Activated T-helper 1 cell treated with anti-CD3 and anti-CD28 coated beads, Interleukin-12 subunit alpha, Interleukin-12 subunit beta, Interleukin-2, Interleukin-4 antibody, amounts not matched to agents 30 ng/mL and 10 ng/mL and 1 ng/mL, durations not matched to agents 14 hours and 24 hours and 36 hours (primary cell): ENCODE measurements at regions of chr14 and their contacts with region 1.

Region 1: DNA sequence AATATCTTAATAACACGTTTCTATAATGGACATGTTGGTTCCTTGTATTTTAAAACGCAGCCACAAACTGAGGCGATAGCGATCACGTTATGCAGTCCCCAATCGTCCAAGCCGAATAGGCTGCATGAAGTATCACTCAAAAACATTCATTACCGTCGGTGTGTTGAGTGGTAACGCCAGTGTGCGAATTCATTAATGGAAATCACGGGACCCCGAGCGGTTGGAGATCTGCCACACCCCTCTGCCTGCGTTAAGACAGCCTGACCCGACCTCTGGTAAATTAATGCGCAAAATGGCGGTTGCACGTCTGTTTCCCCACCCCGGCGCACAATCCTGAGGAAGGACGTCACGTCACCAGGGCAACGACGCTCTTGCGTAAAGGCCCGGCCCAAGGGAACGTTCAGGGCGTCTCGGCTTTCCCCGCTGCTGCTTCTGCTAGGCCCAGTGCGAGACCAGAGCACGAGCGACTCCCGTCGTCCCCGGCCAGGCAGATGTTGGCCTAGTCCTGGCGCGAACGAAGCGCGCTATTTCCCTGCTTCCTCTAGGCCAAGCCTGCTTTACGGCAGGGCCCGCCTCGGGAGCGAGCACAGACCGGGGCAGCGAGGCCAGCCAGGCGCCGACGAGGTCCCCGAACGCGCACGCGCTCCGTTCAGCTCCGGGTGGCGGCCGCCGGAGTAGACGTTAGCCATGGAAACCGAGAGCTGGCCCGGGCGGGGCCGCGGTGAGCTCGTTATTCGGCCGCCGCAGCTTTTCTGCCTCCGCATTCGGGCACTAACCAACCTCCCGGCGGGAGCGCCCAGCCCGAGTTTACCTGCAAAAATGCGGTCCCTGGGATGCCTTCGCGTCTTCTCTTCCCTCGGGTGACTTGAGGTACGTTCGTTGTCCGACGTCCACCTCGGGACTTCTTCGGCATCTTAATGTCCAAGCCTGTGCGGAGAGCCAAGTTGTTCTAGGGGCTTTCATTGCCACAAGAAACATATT is at the start of gene PCNX4:
- DNase-seq: peak; percentile 90
- H3K4me3 Mint-ChIP-seq: peak within 1 kb of the TSS; percentile 98
- H3K27ac Mint-ChIP-seq: peak within 1 kb of the TSS; percentile 98
- H3K4me1 Mint-ChIP-seq: peaks cover 34% of the 10 kb centered on the region
- H3K27me3 Mint-ChIP-seq: peaks cover 2% of the 10 kb centered on the region
- total RNA-seq, gene PCNX4: 41.6 and 46.7 TPM in 2 replicates

Region 2: GRCh38 chr14:59450716-59451115 is 641.1 kb before region 1 on chr14:
- intact Hi-C with region 1: no loop called
- DNase-seq: no peak
- H3K4me3 Mint-ChIP-seq: no peak overlapping the region
- H3K27ac Mint-ChIP-seq: no peak overlapping the region
- H3K4me1 Mint-ChIP-seq: no peaks in the 10 kb centered on the region
- H3K27me3 Mint-ChIP-seq: peaks cover 2% of the 10 kb centered on the region

Region 3: DNA sequence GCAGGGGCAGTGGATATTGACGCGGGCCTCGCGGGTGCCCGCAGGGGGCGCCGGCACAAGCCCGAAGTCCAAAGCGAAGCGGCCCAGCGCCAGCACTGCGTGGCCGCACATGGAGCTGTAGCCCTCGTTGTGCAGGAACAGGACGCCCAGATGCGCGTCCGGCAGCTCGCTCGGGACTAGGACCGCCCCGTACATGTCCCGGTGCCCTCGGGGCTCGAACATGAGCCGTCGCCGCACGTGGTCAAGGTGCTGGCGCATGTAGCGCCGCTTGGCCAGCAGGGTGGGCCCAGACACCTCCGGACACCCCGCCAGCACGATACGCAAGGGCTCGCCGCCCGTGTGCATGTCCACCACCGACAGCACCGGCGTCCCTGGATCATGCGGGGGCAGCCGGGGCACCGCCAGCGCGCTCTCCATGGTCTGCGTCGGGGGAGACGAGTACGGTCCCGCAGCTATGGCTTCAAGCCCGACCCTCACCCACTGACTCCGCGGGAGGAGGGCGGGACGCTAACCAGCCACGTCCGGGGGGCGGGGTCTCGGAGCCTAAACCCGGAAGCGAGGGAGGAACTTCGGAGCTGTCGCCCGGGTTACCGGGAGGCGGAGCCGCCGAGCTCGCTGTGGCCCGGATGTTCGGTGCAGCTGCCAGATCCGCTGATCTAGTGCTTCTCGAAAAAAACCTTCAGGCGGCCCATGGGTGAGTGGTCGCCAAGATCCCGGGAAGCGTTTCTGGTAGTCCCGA is 607.8 kb before region 1 on chr14 and contains the starts of genes JKAMP and L3HYPDH:
- intact Hi-C with region 1: loop called (anchors 1 kb)
- DNase-seq: peak; percentile 95
- H3K4me3 Mint-ChIP-seq: peak within 1 kb of the TSS; percentile 94
- H3K27ac Mint-ChIP-seq: peak within 1 kb of the TSS; percentile 90
- H3K4me1 Mint-ChIP-seq: peaks cover 61% of the 10 kb centered on the region
- H3K27me3 Mint-ChIP-seq: no peaks in the 10 kb centered on the region
- total RNA-seq, gene JKAMP: 27.6 and 28.8 TPM in 2 replicates
- total RNA-seq, gene L3HYPDH: 14.0 and 15.9 TPM in 2 replicates

Region 4: GRCh38 chr14:60079724-60080123 is 12.1 kb before region 1 on chr14:
- intact Hi-C with region 1: no loop called
- DNase-seq: no peak
- H3K4me3 Mint-ChIP-seq: no peak overlapping the region
- H3K27ac Mint-ChIP-seq: no peak overlapping the region
- H3K4me1 Mint-ChIP-seq: no peaks in the 10 kb centered on the region
- H3K27me3 Mint-ChIP-seq: peaks cover 22% of the 10 kb centered on the region

Region 5: DNA sequence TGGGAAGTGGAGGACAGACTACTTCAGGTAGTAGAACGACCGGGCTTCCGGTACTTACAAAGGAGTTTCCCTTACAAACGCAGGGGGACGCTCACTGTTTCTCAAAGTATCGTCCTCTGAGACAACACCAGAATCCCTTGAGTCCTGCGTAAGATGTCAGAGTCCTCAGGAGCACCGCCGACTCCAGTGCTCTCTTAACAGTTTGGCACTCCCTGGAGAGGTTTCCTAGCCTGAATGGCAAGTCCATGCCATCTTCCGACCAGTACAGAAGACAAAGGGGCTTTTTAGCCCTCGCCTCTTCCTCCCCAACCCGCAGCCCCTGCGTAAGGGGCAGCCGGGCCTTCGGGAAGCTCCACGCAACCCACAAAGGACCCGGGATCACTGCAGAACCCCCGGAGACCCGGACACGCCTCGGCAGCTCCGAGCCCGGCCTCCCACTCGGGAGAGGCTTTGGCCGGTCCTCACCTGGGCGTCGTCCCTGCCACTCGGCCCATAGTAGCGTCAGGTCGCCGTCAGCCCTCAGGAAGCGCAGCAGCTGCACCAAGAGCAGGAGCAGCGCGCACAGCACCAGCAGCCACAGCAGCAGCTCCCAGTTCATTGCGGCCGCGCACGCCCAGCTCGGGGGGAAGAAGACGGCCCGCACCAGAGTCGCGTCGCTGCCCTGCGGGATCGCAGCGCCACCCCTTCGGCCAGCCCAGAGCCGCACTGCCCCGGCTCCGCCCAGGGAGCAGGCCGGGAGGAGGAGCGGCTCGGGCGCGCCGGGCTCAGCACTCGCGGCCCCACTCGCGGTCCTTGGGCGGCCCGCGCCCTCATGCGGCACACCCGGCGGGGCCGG is 73.1 kb after region 1 on chr14 and contains the start of gene DHRS7:
- intact Hi-C with region 1: loop called (anchors 1 kb)
- DNase-seq: peak; percentile 55
- H3K4me3 Mint-ChIP-seq: peak within 1 kb of the TSS; percentile 95
- H3K27ac Mint-ChIP-seq: peak within 1 kb of the TSS; percentile 98
- H3K4me1 Mint-ChIP-seq: peaks cover 20% of the 10 kb centered on the region
- H3K27me3 Mint-ChIP-seq: no peaks in the 10 kb centered on the region
- total RNA-seq, gene DHRS7: 43.6 and 47.2 TPM in 2 replicates

Region 6: DNA sequence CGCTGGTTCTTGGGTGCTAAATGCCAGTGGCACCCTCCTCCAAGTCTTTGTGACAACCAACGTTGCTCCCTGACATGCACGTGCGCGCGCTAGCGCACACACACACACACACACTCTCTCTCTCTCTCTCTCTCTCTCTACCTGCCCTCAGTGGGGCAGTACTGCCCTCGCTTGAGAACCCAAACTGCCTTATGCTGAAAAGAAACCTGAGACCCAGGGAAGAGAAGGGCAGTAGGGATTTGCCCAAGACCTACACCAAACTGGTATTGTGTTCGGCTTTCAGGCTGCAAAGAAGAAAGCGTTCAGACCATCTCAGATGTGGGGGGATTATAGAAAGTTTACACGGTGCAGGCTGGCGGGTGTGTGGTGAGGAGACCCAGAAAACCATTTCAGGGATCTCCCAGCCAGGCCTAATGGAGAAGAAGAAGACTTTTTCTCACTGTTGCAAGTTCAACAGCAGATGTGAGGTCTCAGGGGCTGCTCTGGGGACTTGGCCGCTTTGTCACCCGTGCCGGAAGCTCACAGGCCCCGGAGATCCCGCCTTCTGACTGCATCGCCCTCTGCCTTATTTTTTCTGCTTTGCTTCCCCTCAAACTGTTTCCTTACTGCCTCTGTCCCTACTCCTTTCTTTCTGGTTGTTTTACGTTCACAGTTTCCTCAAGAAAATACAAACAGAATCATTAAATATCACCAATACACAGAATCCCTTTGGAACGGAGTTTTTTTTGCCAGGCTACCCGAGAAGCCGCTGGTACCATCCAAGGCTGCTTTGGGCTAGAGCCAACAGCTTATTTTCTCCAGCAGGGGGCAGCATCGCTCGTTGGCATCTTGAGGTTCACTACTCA is 239.6 kb after region 1 on chr14:
- intact Hi-C with region 1: loop called (anchors 1 kb)
- DNase-seq: peak; percentile 60
- H3K4me3 Mint-ChIP-seq: peak overlapping the region; percentile 92
- H3K27ac Mint-ChIP-seq: peak overlapping the region; percentile 94
- H3K4me1 Mint-ChIP-seq: peaks cover 45% of the 10 kb centered on the region
- H3K27me3 Mint-ChIP-seq: peaks cover 37% of the 10 kb centered on the region

Region 7: GRCh38 chr14:60656686-60657455 is 565.0 kb after region 1 on chr14:
- intact Hi-C with region 1: no loop called
- DNase-seq: peak; percentile 24
- H3K4me3 Mint-ChIP-seq: peak overlapping the region; percentile 82
- H3K27ac Mint-ChIP-seq: no peak overlapping the region
- H3K4me1 Mint-ChIP-seq: peaks cover 48% of the 10 kb centered on the region
- H3K27me3 Mint-ChIP-seq: peaks cover 79% of the 10 kb centered on the region

Region 8: DNA sequence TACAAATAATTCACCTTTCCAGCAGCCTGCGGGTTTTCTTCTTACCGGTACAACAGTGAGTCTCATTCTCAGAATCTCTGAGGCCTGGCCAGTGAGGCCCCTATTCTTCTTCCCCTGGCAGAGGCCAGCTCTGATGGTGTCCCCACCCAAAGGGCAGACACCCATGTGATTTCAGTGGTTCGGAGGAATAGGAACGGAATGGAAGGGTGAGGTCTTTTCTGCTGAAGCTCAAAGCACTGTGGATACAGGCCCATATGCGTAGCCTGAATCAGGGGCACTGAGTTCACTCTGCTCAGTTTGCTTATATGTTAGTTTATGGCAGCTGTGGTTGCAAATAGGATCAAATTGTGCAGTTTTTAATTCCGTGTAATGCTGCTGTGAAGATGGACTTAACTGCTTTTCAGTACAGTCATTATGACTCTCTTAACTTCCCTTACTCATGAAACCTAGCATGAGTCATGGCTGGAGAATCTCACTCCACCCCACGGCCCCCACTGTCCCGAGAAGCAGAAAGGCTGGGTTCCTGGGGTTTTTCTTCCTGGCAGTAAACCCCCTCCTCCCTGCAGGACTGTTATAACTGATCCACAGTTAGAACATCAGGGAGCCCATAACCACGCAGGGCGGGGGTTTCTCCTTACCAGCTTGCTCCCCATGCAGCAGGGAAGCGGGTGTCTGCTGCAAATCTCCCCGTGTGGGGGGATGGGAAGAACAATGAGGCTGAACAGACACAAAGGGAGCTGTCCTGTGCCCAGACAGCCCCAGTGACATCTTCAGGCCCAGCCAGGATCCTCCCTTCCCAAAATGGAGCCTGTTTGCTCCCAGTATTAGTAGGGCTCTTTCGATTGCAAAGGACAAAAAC is 1011.9 kb after region 1 on chr14:
- intact Hi-C with region 1: loop called (anchors 5 kb)
- DNase-seq: peak; percentile 25
- H3K4me3 Mint-ChIP-seq: peak overlapping the region; percentile 35
- H3K27ac Mint-ChIP-seq: peak overlapping the region; percentile 82
- H3K4me1 Mint-ChIP-seq: peaks cover 38% of the 10 kb centered on the region
- H3K27me3 Mint-ChIP-seq: no peaks in the 10 kb centered on the region